Endothelial cell of umbilical vein (primary cell): ENCODE measurements at regions of chr11 and their contacts with region 1.

Region 1: GRCh38 chr11:8688414-8689362 is 6.1 kb downstream of the RPL27A start:
- DNase-seq: peak; percentile 93
- H3K4me3 ChIP-seq: peak overlapping the region; percentile 45 to 86 (median 53)
- H3K27ac ChIP-seq: peak overlapping the region; percentile 65
- H3K4me1 ChIP-seq: peaks cover 46% of the 10 kb centered on the region
- H3K27me3 ChIP-seq: no peaks in the 10 kb centered on the region
- CTCF ChIP-seq: no peak
- POLR2A ChIP-seq: peak; percentile 99

Region 2: GRCh38 chr11:8018484-8019313 is 670.0 kb before region 1 on chr11:
- CTCF ChIA-PET with region 1: no interaction called
- POLR2A ChIA-PET with region 1: no interaction called
- dilution Hi-C with region 1: no loop called
- intact Hi-C with region 1: no loop called
- DNase-seq: peak; percentile 30
- H3K4me3 ChIP-seq: peak overlapping the region; percentile 25 to 39 (median 36)
- H3K27ac ChIP-seq: no peak overlapping the region
- H3K4me1 ChIP-seq: peaks cover 5% of the 10 kb centered on the region
- H3K27me3 ChIP-seq: peaks cover 37 to 43% of the 10 kb centered on the region in 2 experiments
- CTCF ChIP-seq: no peak
- POLR2A ChIP-seq: no peak

Region 3: GRCh38 chr11:8870411-8871170 is 181.9 kb after region 1 on chr11:
- CTCF ChIA-PET with region 1: no interaction called
- POLR2A ChIA-PET with region 1: no interaction called
- dilution Hi-C with region 1: no loop called
- intact Hi-C with region 1: loop called (anchors 2 kb)
- DNase-seq: peak; percentile 68
- H3K4me3 ChIP-seq: peak overlapping the region; percentile 6 to 50 (median 39)
- H3K27ac ChIP-seq: no peak overlapping the region
- H3K4me1 ChIP-seq: peaks cover 20% of the 10 kb centered on the region
- H3K27me3 ChIP-seq: no peaks in the 10 kb centered on the region
- CTCF ChIP-seq: no peak
- POLR2A ChIP-seq: no peak